ENCODE measurements at regions of chr2 and their contacts with region 1.

Region 1: GRCh38 chr2:75627895-75628504 is 18.6 kb upstream of the MRPL19 start:
- DNase-seq: peak; percentile 71
- H3K27ac ChIP-seq: no peak overlapping the region
- CTCF ChIP-seq: peak; percentile 92

Region 2: DNA sequence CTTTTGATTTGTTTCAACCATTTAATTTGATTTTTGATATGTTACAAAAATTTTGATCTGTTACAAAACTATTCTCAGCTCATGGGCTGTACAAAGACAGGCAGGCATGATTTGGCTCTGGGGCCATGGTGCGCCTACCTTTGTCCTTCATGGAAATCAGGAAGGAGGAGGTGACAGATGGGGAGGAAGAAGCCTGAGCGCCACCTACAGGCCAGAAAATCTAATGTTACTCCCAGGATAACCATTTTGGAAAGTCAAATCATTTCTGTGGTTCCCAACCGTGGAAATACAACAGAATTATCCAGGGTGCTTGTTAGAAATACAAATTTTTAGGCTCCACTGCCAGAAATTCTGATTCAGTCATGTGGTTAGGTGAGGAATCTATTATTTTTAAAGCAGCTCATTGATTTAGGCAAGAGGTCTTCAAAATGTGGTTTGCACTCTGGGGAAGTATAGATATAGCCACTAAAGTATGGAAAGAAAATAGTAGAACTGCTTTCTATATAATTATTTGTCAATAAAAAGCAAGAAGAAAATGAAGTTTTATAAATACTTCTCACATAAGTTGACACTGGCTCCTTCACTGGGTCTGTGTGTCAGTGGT is 161.2 kb before region 1 on chr2:
- CTCF ChIA-PET with region 1: interaction called, 26 read pairs
- POLR2A ChIA-PET with region 1: no interaction called
- DNase-seq: peak; percentile 30
- H3K27ac ChIP-seq: no peak overlapping the region
- CTCF ChIP-seq: peak; percentile 29; the same call in 1 of the 2 replicates

Region 3: DNA sequence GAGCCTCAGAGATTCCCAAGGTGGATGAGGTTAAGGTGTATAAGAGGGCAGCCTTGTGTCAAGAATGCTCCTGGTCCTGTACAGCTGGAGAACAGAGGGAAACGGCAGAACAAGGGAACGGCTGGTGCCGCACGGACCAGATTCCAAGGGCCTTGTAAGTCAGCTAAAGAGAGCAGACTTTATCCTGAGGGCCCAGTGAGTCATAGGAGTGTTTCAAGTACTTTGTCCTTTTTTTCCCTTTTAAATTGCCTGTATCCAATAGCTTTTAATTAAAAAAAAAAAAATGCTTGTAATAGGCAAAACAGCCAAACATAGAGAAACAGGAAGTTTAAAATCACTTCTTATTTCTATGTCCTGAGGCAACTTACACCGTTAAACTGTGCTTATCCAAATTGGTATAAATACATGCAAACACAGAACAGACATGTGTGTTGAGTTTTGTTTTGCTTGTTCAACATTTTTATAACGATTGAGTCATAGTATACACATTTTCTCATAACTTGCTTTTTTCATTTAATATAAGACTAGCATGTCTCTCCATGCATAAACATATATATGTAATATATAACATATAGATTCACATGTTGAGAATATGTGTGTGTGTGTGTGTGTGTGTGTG is 25.2 kb before region 1 on chr2:
- CTCF ChIA-PET with region 1: no interaction called
- POLR2A ChIA-PET with region 1: no interaction called
- DNase-seq: peak; percentile 84
- H3K27ac ChIP-seq: no peak overlapping the region
- CTCF ChIP-seq: no peak